Motor neuron (in vitro differentiated cells): ENCODE measurements at regions of chr5 and their contacts with region 1.

Region 1: DNA sequence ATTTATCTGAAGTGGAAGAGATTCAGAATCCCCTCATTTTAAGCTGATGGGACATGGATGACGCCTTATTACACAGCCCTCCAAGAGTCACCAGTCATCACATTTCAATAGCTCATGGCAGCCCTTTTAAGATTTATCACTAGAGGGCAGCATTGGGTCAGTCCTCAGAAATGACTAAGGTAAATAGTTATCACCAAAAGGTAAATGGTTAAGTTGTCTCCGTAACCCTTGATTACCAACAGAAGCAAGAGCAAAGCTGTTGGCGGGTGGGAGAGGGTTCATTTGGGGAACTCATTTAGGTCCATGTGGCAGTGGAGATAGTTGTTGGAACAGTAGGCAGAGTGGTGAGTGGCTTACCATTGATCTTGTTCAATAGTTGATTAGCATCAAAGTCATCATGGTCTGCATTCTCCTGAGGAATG is 12.0 kb upstream of the C9 start:
- ATAC-seq: peak in 5 of 8 experiments; percentile 39 to 81 (median 62)
- H3K4me3 ChIP-seq: no peak overlapping the region
- H3K27ac ChIP-seq: no peak overlapping the region
- H3K4me1 ChIP-seq: no peaks in the 10 kb centered on the region

Region 2: GRCh38 chr5:39080597-39081204 is 295.6 kb before region 1 on chr5:
- in situ Hi-C with region 1: no loop called
- ATAC-seq: peak in 4 of 8 experiments; percentile 23 to 76 (median 72)
- H3K4me3 ChIP-seq: no peak overlapping the region
- H3K27ac ChIP-seq: no peak overlapping the region
- H3K4me1 ChIP-seq: no peaks in the 10 kb centered on the region

Region 3: DNA sequence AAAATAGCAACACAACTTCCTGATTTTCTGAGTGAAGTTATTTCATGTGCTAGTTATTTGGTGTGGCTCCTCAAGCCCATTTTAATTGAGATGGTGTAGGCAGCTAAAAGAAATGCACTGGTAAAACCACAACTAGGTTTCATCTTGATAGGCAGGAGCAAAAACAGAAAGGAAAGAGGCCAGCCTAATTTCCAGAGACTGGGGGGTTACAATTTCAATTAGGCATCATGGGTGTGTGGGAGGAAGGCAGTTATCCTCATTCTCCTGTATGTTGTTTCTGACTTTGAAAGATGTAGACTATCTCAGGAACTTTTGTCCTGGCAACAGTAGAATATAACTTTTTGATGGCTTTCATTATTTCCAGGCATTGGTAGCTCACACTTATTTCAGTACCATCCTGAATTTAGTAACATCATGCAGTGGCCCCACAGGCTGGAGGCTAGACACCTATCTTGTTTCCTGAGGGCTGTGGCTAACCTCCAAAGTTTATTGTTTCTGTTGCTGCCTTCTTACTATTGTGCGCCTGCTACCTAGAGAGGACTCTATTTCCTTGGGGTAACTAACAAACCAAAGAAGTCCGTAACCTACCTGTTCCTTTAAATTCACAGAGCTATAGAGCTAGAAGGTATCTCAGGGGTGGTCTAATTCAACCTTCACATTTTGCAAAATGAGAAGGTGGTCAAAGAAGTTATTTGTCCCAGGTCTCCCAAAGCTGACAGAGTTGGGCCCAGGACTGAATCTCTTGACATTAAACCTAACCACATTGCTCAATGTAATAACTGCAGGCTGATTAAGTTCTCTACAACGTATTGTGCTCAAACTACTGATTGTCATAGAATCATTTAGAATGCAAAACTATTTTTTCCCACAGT is 199.3 kb before region 1 on chr5:
- in situ Hi-C with region 1: no loop called
- ATAC-seq: no peak
- H3K4me3 ChIP-seq: no peak overlapping the region
- H3K27ac ChIP-seq: no peak overlapping the region
- H3K4me1 ChIP-seq: no peaks in the 10 kb centered on the region

Region 4: GRCh38 chr5:39547553-39548154 is 171.3 kb after region 1 on chr5:
- in situ Hi-C with region 1: loop called in 7 of 9 experiments (anchors 10 to 25 kb)
- ATAC-seq: peak in 4 of 8 experiments; percentile 37 to 80 (median 62)
- H3K4me3 ChIP-seq: no peak overlapping the region
- H3K27ac ChIP-seq: no peak overlapping the region
- H3K4me1 ChIP-seq: no peaks in the 10 kb centered on the region

Region 5: GRCh38 chr5:39555788-39556187 is 179.5 kb after region 1 on chr5:
- in situ Hi-C with region 1: loop called in 4 of 9 experiments (anchors 10 to 25 kb)
- ATAC-seq: no peak
- H3K4me3 ChIP-seq: no peak overlapping the region
- H3K27ac ChIP-seq: no peak overlapping the region
- H3K4me1 ChIP-seq: no peaks in the 10 kb centered on the region

Region 6: GRCh38 chr5:39570403-39571027 is 194.2 kb after region 1 on chr5:
- in situ Hi-C with region 1: loop called in 2 of 9 experiments (anchors 25 kb)
- ATAC-seq: peak in 3 of 8 experiments; percentile 37 to 42 (median 38)
- H3K4me3 ChIP-seq: no peak overlapping the region
- H3K27ac ChIP-seq: no peak overlapping the region
- H3K4me1 ChIP-seq: no peaks in the 10 kb centered on the region